Posterior vena cava (tissue), 2 donors: ENCODE measurements at regions of chr1 and their contacts with region 1.

Region 1: DNA sequence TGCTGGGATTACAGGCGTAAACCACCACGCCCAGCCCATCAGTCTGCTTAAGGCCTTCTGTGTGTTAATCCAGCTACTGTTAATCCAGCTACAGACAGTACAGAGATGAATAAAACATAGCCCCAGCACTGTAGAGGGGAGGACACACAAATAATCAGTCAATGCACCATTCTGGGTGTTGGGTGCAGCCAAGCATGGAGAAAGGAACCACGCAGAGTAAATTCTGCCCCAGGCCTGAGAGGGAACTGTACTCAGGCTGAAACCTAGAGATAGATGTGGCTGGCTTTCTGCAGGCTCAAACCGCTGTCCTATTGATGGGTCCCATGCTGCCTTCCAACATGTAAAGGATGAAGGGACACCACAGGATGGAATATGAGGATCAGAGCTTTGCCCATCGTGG is 136.8 kb upstream of the IGSF21 start:
- DNase-seq: no peak

Region 2: DNA sequence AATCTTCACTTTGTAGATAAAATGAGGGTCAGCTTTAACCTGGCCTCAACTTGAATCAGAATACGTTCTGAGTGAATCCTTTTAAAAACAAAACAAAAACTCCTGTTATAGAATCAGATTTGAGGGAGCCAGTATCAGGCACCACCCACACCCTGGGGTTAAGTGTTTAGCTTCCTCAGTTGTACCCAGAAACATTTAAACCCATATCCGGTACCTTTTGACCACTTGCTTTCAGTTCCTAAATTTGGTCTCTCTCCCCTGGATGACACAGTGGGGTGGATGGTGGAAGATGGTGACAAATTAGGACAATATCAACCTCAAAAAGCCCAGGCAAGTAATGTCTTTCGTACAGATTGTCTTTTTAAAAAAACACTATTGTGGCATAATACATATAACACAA is 520.4 kb after region 1 on chr1:
- intact Hi-C with region 1: loop called in 1 of 2 experiments (anchors 2 kb)
- DNase-seq: no peak

Region 3: GRCh38 chr1:18868801-18869424 is 898.2 kb after region 1 on chr1:
- intact Hi-C with region 1: no loop called
- DNase-seq: no peak